Heart left ventricle (tissue), 16 donors: ENCODE measurements at regions of chr3 and their contacts with region 1.

Region 1: DNA sequence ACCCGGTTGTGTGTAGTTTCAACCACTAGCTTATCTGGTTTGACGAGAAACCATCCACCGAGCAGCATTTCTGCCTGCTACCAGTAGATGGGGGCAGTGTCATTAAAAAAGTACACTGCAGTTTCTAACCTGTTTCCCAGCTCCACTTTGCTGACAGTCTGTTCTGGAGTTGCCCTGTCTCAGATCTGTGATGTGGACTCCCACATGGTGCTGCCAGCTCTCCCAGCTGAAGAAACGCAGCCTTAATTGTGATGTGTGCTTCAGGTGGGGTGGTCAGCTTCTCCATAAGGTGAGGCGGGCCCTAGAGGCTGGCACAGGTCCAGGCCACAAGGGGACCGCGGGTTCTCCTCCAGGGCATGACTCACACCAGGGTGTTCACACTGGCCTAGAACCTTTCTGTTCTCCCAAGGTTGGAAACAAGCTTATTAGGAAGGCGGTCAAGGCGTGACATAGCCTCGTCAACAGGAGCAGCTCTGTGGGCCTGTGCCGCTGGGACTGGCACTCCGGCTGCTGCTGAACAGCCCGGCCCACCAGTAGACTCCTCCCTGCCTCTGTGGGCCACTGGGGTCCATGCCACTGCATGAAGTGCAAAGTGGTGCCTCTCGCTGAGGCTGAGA is 2.9 kb upstream of the FAM43A start:
- DNase-seq: peak; percentile 67 to 75 (median 71)
- ATAC-seq: peak; percentile 41 to 79 (median 61)
- H3K4me3 ChIP-seq: no peak overlapping the region
- H3K27ac ChIP-seq: peak overlapping the region in 8 of 12 donors; percentile 5 to 61 (median 40)
- H3K4me1 ChIP-seq: peaks cover 4 to 34% (median 22%) of the 10 kb centered on the region in 12 donors
- H3K27me3 ChIP-seq: no peaks in the 10 kb centered on the region
- CTCF ChIP-seq: peak; percentile 74 to 96 (median 88)
- POLR2A ChIP-seq: no peak

Region 2: GRCh38 chr3:194871143-194871863 is 188.5 kb after region 1 on chr3:
- intact Hi-C with region 1: loop called in 7 of 10 experiments (anchors 5 kb)
- DNase-seq: peak; percentile 50 to 78 (median 73)
- ATAC-seq: peak; percentile 57 to 76 (median 66)
- H3K4me3 ChIP-seq: no peak overlapping the region
- H3K27ac ChIP-seq: peak overlapping the region in 11 of 12 donors; percentile 44 to 82 (median 70)
- H3K4me1 ChIP-seq: peaks cover 5 to 55% (median 36%) of the 10 kb centered on the region in 12 donors
- H3K27me3 ChIP-seq: no peaks in the 10 kb centered on the region
- CTCF ChIP-seq: no peak
- POLR2A ChIP-seq: no peak

Region 3: GRCh38 chr3:194952841-194953241 is 270.0 kb after region 1 on chr3:
- intact Hi-C with region 1: loop called in 6 of 10 experiments (anchors 2 to 10 kb)
- DNase-seq: peak in 2 of 5 donors; percentile 26 to 52
- ATAC-seq: peak in 3 of 4 donors; percentile 60 to 71 (median 61)
- H3K4me3 ChIP-seq: no peak overlapping the region
- H3K27ac ChIP-seq: peak overlapping the region in 9 of 12 donors; percentile 6 to 72 (median 60)
- H3K4me1 ChIP-seq: peaks cover 0 to 33% (median 17%) of the 10 kb centered on the region in 12 donors
- H3K27me3 ChIP-seq: no peaks in the 10 kb centered on the region
- CTCF ChIP-seq: no peak
- POLR2A ChIP-seq: no peak

Region 4: GRCh38 chr3:194990454-194991337 is 307.9 kb after region 1 on chr3:
- intact Hi-C with region 1: loop called in 6 of 10 experiments (anchors 1 to 10 kb)
- DNase-seq: no peak
- ATAC-seq: no peak
- H3K4me3 ChIP-seq: no peak overlapping the region
- H3K27ac ChIP-seq: no peak overlapping the region
- H3K4me1 ChIP-seq: peaks cover 0 to 1% (median 0%) of the 10 kb centered on the region in 12 donors
- H3K27me3 ChIP-seq: no peaks in the 10 kb centered on the region
- CTCF ChIP-seq: no peak
- POLR2A ChIP-seq: no peak

Region 5: DNA sequence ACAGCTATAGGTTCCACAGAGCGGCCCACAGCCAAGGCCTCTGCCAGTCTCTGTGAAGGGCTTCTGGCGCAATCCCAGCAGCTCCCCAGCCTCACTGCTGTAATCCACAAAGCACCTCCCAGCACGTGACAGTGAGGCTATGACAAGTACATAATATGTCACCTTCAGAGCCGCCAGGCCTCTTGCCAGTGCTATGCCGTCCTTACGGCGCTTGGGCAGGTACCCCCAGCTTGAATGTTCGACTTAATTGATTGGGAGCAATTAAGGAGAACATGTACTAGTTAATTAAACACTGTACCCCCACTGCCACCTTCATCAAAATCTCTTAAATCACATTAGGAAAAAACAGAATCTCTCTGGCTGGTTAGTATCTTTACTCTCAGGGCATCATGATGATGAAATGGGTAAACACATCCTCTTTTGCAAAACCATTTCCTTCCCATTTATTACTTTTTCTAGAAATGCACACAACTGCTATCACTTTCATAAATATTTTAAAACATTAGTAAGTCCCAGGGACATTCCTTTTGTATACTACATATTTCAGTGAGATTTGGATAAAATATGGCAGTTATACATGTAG is 418.3 kb after region 1 on chr3:
- intact Hi-C with region 1: loop called (anchors 1 to 5 kb)
- DNase-seq: peak; percentile 78 to 91 (median 87)
- ATAC-seq: peak; percentile 60 to 79 (median 76)
- H3K4me3 ChIP-seq: no peak overlapping the region
- H3K27ac ChIP-seq: peak overlapping the region in 11 of 12 donors; percentile 2 to 79 (median 63)
- H3K4me1 ChIP-seq: peaks cover 2 to 53% (median 31%) of the 10 kb centered on the region in 12 donors
- H3K27me3 ChIP-seq: no peaks in the 10 kb centered on the region
- CTCF ChIP-seq: no peak
- POLR2A ChIP-seq: no peak

Region 6: GRCh38 chr3:195154793-195155535 is 472.2 kb after region 1 on chr3:
- intact Hi-C with region 1: loop called in 1 of 10 experiments (anchors 5 kb)
- DNase-seq: peak; percentile 90 to 92 (median 91)
- ATAC-seq: peak; percentile 62 to 82 (median 75)
- H3K4me3 ChIP-seq: no peak overlapping the region
- H3K27ac ChIP-seq: peak overlapping the region; percentile 41 to 92 (median 85)
- H3K4me1 ChIP-seq: peaks cover 14 to 80% (median 66%) of the 10 kb centered on the region in 12 donors
- H3K27me3 ChIP-seq: no peaks in the 10 kb centered on the region
- CTCF ChIP-seq: no peak
- POLR2A ChIP-seq: no peak